ENCODE measurements at regions of chr9 and their contacts with region 1.

Region 1: DNA sequence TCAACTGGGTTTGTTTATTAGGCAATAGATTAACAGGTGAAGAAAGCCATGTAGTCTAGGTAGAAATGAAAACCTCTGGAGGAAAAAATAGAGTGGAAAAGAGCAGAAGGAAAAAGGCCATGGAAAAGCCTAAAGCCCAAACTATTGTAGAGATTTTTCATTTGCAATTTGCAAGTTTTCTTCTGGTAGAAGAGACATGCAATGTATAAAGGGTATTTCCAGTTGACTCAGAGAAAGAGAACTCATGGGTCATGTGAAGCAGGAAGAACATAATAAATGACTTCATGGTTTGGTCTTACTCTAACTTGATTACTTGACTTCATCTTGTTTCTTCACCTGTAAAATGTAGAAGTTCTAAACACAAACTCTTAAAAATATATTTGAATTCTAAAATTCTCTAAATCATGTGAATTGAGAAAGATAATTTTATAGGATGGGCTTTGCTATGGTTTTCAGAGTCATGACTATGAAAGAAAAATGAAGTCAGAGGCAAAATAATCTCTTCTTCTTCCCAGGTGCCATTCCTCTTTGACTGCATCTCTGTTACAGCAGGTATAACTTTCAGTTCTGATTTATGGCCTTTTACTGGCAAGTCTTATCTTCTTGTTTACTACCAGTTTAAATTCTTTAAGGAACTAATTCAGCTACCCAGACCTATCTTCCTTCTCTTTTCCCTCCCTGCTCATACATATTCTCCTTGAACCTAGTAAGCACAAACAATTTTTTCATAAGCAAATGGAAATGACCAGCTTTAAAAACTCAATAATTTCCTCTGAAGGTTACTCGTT is 47.7 kb upstream of the TMC1 start:
- DNase-seq: no peak
- H3K4me3 Mint-ChIP-seq: peak overlapping the region; percentile 42
- H3K27ac Mint-ChIP-seq: peak overlapping the region; percentile 83
- H3K4me1 Mint-ChIP-seq: peaks cover 39% of the 10 kb centered on the region
- H3K27me3 Mint-ChIP-seq: no peaks in the 10 kb centered on the region

Region 2: GRCh38 chr9:72383978-72384709 is 89.5 kb before region 1 on chr9:
- intact Hi-C with region 1: loop called (anchors 1 kb)
- DNase-seq: no peak
- H3K4me3 Mint-ChIP-seq: no peak overlapping the region
- H3K27ac Mint-ChIP-seq: no peak overlapping the region
- H3K4me1 Mint-ChIP-seq: peaks cover 11% of the 10 kb centered on the region
- H3K27me3 Mint-ChIP-seq: peaks cover 4% of the 10 kb centered on the region

Region 3: DNA sequence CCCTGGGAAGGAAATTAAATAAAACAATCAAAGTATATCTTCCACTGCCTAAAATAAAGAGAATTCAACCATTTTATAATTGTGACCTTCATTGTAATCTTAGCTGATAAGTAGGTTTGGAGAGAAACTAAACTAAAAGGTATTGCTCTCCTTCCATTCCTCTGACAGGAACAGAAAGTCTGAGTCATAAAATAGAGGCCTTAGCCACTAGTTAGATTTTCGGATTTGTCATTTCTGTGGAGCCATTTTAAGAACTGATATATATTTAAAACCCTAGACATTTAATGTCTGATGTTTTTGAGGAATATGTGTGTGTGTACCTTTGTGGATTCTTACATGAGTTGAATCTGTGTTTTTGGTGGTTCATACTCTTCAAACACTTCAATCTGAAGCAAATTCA is 36.0 kb after region 1 on chr9:
- intact Hi-C with region 1: loop called (anchors 1 kb)
- DNase-seq: no peak
- H3K4me3 Mint-ChIP-seq: peak overlapping the region; percentile 64
- H3K27ac Mint-ChIP-seq: peak overlapping the region; percentile 83
- H3K4me1 Mint-ChIP-seq: peaks cover 19% of the 10 kb centered on the region
- H3K27me3 Mint-ChIP-seq: no peaks in the 10 kb centered on the region

Region 4: GRCh38 chr9:72579880-72580570 is 106.4 kb after region 1 on chr9:
- intact Hi-C with region 1: loop called (anchors 2 kb)
- DNase-seq: no peak
- H3K4me3 Mint-ChIP-seq: no peak overlapping the region
- H3K27ac Mint-ChIP-seq: peak overlapping the region; percentile 0
- H3K4me1 Mint-ChIP-seq: peaks cover 32% of the 10 kb centered on the region
- H3K27me3 Mint-ChIP-seq: no peaks in the 10 kb centered on the region

Measured in activated CD4-positive, alpha-beta T cell treated with anti-CD3 and anti-CD28 coated beads, Interleukin-2, amount 10 ng/mL, durations not matched to agents 24 days and 14 days (primary cell).